ENCODE measurements at regions of chr3 and their contacts with region 1.

Region 1: DNA sequence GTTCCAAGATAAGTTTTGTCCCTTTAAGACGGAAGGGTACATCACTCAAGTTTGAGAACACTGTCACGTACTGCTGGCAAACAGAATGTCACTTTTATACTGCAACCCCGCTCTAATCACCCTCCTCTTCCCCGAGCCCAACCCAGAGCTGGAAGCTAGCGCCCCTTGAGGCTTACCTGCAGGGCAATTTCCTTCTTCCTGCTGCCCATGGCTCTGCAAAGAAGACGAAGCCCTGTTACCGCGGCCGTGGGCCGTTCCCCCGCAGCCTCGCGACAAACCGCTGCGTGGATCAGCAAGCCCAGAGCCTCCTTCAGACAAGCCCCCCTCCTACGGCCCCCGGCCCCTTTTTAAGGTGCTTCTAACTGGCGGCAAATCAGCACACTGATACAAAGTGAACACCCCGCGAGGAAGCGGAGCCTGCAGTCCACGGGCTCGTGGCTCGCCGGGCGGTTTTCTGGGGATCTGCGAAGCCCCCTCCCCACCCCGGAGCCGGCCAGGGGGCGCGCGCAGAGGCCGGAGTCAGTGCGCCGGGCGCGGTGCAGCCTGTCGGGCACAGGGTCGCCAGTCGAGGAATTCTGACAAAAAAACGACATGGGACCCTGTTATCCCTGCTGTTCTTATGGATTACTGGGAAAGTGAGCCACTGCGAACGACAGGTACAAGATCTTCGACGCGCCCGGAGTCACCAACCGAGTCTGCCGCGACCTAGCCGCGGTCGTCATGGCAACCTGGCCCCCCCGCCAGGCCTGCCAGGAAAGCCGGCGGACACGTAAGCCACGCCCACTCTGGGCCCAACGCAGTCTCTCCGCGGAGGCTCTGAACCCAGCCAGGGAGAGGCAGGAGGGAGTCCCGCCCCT is at the start of gene NME9:
- DNase-seq: peak; percentile 92
- H3K4me3 Mint-ChIP-seq: peak within 1 kb of the TSS; percentile 91
- H3K27ac Mint-ChIP-seq: peak within 1 kb of the TSS; percentile 86
- H3K4me1 Mint-ChIP-seq: peaks cover 47% of the 10 kb centered on the region
- H3K27me3 Mint-ChIP-seq: no peaks in the 10 kb centered on the region
- total RNA-seq, gene NME9: 2.0 to 2.4 TPM

Region 2: GRCh38 chr3:138068579-138069174 is 260.7 kb before region 1 on chr3:
- CTCF ChIA-PET with region 1: no interaction called
- intact Hi-C with region 1: loop called (anchors 2 kb)
- DNase-seq: peak; percentile 87
- H3K4me3 Mint-ChIP-seq: no peak overlapping the region
- H3K27ac Mint-ChIP-seq: no peak overlapping the region
- H3K4me1 Mint-ChIP-seq: peaks cover 6% of the 10 kb centered on the region
- H3K27me3 Mint-ChIP-seq: peaks cover 10% of the 10 kb centered on the region

Region 3: GRCh38 chr3:138180375-138181029 is 148.9 kb before region 1 on chr3:
- CTCF ChIA-PET with region 1: interaction called, 12 read pairs
- intact Hi-C with region 1: loop called (anchors 1 kb)
- DNase-seq: peak; percentile 76
- H3K4me3 Mint-ChIP-seq: no peak overlapping the region
- H3K27ac Mint-ChIP-seq: no peak overlapping the region
- H3K4me1 Mint-ChIP-seq: peaks cover 3% of the 10 kb centered on the region
- H3K27me3 Mint-ChIP-seq: peaks cover 1% of the 10 kb centered on the region

Region 4: GRCh38 chr3:138263104-138263503 is 66.3 kb before region 1 on chr3:
- CTCF ChIA-PET with region 1: no interaction called
- intact Hi-C with region 1: loop called (anchors 2 kb)
- DNase-seq: no peak
- H3K4me3 Mint-ChIP-seq: no peak overlapping the region
- H3K27ac Mint-ChIP-seq: no peak overlapping the region
- H3K4me1 Mint-ChIP-seq: no peaks in the 10 kb centered on the region
- H3K27me3 Mint-ChIP-seq: no peaks in the 10 kb centered on the region

Region 5: DNA sequence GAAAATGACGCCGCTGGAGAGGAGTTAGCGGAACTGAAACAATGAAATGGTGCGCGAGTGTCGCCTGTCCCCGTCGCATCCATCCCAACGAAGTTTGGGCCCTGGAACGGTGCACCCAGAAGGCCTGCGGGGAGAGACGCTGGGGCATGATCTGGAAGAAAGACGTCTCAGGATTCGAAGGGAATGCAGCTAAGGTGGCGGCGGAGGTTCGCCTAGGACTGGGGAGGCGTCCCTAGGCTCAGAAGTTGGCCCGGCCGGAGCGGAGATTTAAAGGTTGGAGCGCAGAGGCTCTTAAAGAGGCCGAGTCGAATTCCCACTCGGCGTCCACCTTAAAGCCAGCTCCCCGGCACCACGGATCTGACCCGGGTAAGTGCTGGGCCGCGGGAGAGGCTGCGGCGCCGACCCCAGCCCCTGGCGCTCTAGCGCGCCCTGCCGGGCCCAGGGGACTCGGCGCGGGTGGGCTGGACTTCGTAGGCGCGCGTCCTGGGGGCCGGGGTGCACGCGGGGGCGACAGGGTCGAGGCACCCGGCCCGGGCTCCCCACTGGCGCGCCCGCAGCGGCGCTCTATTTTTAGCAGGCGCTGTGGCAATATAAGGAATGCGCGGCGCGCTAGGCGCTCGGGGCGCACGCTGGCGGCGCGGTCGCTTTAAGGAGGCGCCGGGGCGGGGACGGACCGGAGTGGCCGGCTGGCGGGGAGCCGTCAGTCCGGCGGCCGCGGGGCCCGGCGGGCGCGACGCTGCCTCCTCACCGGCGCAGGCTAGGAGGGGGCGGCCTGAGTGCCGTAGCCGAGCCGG is 18.8 kb after region 1 on chr3 and contains the start of gene MRAS:
- CTCF ChIA-PET with region 1: interaction called, 22 read pairs
- intact Hi-C with region 1: loop called (anchors 1 kb)
- DNase-seq: peak; percentile 44
- H3K4me3 Mint-ChIP-seq: peak within 1 kb of the TSS; percentile 94
- H3K27ac Mint-ChIP-seq: peak within 1 kb of the TSS; percentile 62
- H3K4me1 Mint-ChIP-seq: peaks cover 6% of the 10 kb centered on the region
- H3K27me3 Mint-ChIP-seq: peaks cover 26% of the 10 kb centered on the region
- total RNA-seq, gene MRAS: 0.52 to 0.62 TPM

Region 6: GRCh38 chr3:138371070-138371965 is 42.0 kb after region 1 on chr3:
- CTCF ChIA-PET with region 1: no interaction called
- intact Hi-C with region 1: no loop called
- DNase-seq: no peak
- H3K4me3 Mint-ChIP-seq: no peak overlapping the region
- H3K27ac Mint-ChIP-seq: no peak overlapping the region
- H3K4me1 Mint-ChIP-seq: no peaks in the 10 kb centered on the region
- H3K27me3 Mint-ChIP-seq: peaks cover 7% of the 10 kb centered on the region

Region 7: GRCh38 chr3:138594150-138594934 is 265.0 kb after region 1 on chr3 and contains the start of gene CEP70:
- CTCF ChIA-PET with region 1: interaction called, 3 read pairs
- intact Hi-C with region 1: loop called (anchors 1 kb)
- DNase-seq: peak; percentile 90
- H3K4me3 Mint-ChIP-seq: peak within 1 kb of the TSS; percentile 96
- H3K27ac Mint-ChIP-seq: peak within 1 kb of the TSS; percentile 87
- H3K4me1 Mint-ChIP-seq: peaks cover 4% of the 10 kb centered on the region
- H3K27me3 Mint-ChIP-seq: no peaks in the 10 kb centered on the region
- total RNA-seq, gene CEP70: 16.3 to 20.4 TPM

Region 8: DNA sequence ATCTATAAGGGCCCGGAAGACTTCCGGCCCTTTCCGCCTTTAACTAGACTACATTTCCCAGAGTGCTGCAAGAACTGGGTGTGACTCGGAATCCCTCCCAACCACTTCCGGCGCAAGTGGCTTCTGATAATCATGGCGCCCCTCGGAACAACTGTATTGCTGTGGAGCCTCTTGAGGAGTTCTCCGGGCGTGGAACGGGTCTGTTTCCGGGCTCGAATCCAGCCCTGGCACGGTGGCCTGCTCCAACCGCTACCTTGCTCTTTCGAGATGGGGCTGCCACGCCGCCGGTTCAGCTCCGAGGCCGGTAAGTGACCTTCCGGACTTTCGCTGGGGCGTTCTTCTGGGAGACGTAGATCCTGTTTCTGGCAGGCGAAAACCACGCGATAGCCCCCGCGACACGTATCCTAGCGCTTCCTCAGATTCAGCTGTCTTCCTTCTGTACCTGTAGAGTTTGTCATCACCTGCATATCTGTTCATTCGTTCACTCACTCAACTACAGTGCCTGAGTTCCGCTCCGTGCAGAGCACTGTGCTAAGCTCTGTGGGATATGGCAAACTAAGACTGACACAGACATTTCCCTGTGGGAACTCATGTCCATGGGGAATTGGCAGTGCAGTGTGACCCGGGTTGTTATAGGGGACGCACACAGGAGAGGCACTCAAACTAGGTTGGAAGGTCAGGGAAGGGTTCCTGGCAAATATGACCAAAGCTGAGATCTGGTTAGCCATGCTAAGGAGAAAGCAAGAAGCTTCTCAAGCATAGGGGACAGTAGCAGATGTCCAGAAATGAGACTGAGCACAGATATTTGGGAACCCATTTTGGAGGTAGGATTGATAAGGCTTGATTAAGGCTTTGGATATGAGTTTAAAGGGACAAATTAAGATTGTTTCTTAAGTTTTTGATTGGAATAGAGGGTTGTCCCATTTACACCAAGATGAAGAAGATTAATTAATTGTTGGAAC is 1014.8 kb after region 1 on chr3 and contains the start of gene MRPS22:
- CTCF ChIA-PET with region 1: no interaction called
- intact Hi-C with region 1: loop called (anchors 10 kb)
- DNase-seq: peak; percentile 89
- H3K4me3 Mint-ChIP-seq: no peak within 1 kb of the TSS
- H3K27ac Mint-ChIP-seq: no peak within 1 kb of the TSS
- H3K4me1 Mint-ChIP-seq: peaks cover 9% of the 10 kb centered on the region
- H3K27me3 Mint-ChIP-seq: peaks cover 3% of the 10 kb centered on the region
- total RNA-seq, gene MRPS22: 66.8 to 69.1 TPM